ENCODE measurements at regions of chr18 and their contacts with region 1.

Region 1: DNA sequence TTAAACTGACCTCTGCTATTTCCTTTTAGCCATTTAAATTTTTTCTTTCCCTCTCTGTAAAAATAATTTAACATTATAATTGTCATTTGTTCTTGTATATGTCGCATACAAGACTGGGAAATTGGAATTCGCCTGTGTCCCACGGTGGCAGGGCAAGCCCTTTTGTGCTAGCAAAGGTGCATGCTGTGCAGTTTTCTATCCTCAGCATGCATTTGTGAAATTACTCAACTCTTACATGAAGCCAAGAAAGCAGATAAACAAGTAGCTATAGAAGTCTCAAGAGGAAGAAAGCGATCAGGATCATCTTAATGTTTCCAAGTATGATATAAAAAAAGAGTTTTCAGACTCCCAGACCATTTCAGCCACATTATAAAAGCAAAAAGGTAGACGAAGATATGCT is 392.6 kb upstream of the CHST9 start:
- DNase-seq: no peak
- ATAC-seq: no peak
- H3K4me3 Mint-ChIP-seq: no peak overlapping the region
- H3K27ac Mint-ChIP-seq: 0 out of 2 replicates have a peak overlapping the region, but pooled peaks have one; percentile 74
- H3K4me1 Mint-ChIP-seq: peaks cover 19% of the 10 kb centered on the region
- H3K27me3 Mint-ChIP-seq: no peaks in the 10 kb centered on the region
- CTCF ChIP-seq: no peak

Region 2: GRCh38 chr18:26022585-26022984 is 1555.2 kb before region 1 on chr18:
- CTCF ChIA-PET with region 1: no interaction called
- POLR2A ChIA-PET with region 1: interaction called, 14 read pairs
- DNase-seq: no peak
- ATAC-seq: peak; percentile 74
- H3K4me3 Mint-ChIP-seq: no peak overlapping the region
- H3K27ac Mint-ChIP-seq: no peak overlapping the region
- H3K4me1 Mint-ChIP-seq: peaks cover 16% of the 10 kb centered on the region
- H3K27me3 Mint-ChIP-seq: no peaks in the 10 kb centered on the region
- CTCF ChIP-seq: no peak

Region 3: GRCh38 chr18:27447451-27447881 is 130.3 kb before region 1 on chr18:
- CTCF ChIA-PET with region 1: no interaction called
- POLR2A ChIA-PET with region 1: no interaction called
- DNase-seq: no peak
- ATAC-seq: peak; percentile 56
- H3K4me3 Mint-ChIP-seq: no peak overlapping the region
- H3K27ac Mint-ChIP-seq: no peak overlapping the region
- H3K4me1 Mint-ChIP-seq: peaks cover 7% of the 10 kb centered on the region
- H3K27me3 Mint-ChIP-seq: no peaks in the 10 kb centered on the region
- CTCF ChIP-seq: no peak